Activated CD4-positive, alpha-beta T cell treated with anti-CD3 and anti-CD28 coated beads, Interleukin-2, amount 10 ng/mL, durations not matched to agents 7 days and 5 days (primary cell): ENCODE measurements at regions of chr5 and their contacts with region 1.

Region 1: GRCh38 chr5:132426525-132427138 is 57.1 kb downstream of the SLC22A5 start:
- DNase-seq: peak; percentile 70
- H3K4me3 Mint-ChIP-seq: peak overlapping the region; percentile 66
- H3K27ac Mint-ChIP-seq: peak overlapping the region; percentile 98
- H3K4me1 Mint-ChIP-seq: peaks cover 98% of the 10 kb centered on the region
- H3K27me3 Mint-ChIP-seq: no peaks in the 10 kb centered on the region

Region 2: GRCh38 chr5:132380047-132380446 is 46.6 kb before region 1 on chr5:
- CTCF ChIA-PET with region 1: no interaction called
- POLR2A ChIA-PET with region 1: no interaction called
- DNase-seq: no peak
- H3K4me3 Mint-ChIP-seq: no peak overlapping the region
- H3K27ac Mint-ChIP-seq: no peak overlapping the region
- H3K4me1 Mint-ChIP-seq: peaks cover under 1% of the 10 kb centered on the region
- H3K27me3 Mint-ChIP-seq: no peaks in the 10 kb centered on the region

Region 3: GRCh38 chr5:132437604-132438266 is 11.1 kb after region 1 on chr5:
- CTCF ChIA-PET with region 1: interaction called, 26 read pairs
- POLR2A ChIA-PET with region 1: no interaction called
- DNase-seq: peak; percentile 72
- H3K4me3 Mint-ChIP-seq: peak overlapping the region; percentile 53
- H3K27ac Mint-ChIP-seq: peak overlapping the region; percentile 89
- H3K4me1 Mint-ChIP-seq: peaks cover 87% of the 10 kb centered on the region
- H3K27me3 Mint-ChIP-seq: no peaks in the 10 kb centered on the region

Region 4: GRCh38 chr5:132466433-132467286 is 40.0 kb after region 1 on chr5:
- CTCF ChIA-PET with region 1: interaction called, 53 read pairs
- POLR2A ChIA-PET with region 1: interaction called, 19 read pairs
- DNase-seq: peak; percentile 83
- H3K4me3 Mint-ChIP-seq: peak overlapping the region; percentile 67
- H3K27ac Mint-ChIP-seq: peak overlapping the region; percentile 87
- H3K4me1 Mint-ChIP-seq: peaks cover 96% of the 10 kb centered on the region
- H3K27me3 Mint-ChIP-seq: no peaks in the 10 kb centered on the region

Region 5: GRCh38 chr5:132479111-132479951 is 52.7 kb after region 1 on chr5:
- CTCF ChIA-PET with region 1: interaction called, 62 read pairs
- POLR2A ChIA-PET with region 1: interaction called, 14 read pairs
- DNase-seq: no peak
- H3K4me3 Mint-ChIP-seq: peak overlapping the region; percentile 3
- H3K27ac Mint-ChIP-seq: peak overlapping the region; percentile 73
- H3K4me1 Mint-ChIP-seq: peaks cover 73% of the 10 kb centered on the region
- H3K27me3 Mint-ChIP-seq: no peaks in the 10 kb centered on the region

Region 6: DNA sequence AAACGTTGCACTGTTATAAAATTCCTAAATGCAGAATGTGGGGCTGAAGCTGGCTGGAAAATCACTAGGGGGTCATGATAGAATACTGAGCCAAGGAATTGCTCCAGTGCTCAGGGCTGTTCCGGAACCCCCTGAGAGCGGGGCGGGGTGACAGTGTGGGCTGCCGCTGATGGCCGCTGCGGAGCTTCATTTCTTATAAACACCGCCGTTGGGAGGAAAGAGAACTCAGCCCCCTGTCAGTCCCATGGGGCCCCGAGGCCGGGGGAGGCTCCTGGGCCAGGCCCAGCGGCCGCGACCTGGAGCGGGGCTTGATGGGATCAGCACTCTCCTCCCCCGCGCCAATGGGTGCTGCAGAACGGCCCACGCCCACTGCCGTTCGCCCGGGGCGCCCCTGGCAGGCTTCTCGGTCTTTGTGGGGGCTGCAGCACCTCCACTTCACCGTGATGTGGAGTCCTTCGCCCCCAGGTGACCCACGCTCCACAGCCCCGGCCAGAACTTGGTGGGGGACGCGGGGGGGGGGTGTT is 69.1 kb after region 1 on chr5:
- CTCF ChIA-PET with region 1: interaction called, 32 read pairs
- POLR2A ChIA-PET with region 1: interaction called, 21 read pairs
- DNase-seq: peak; percentile 81
- H3K4me3 Mint-ChIP-seq: peak overlapping the region; percentile 92
- H3K27ac Mint-ChIP-seq: peak overlapping the region; percentile 98
- H3K4me1 Mint-ChIP-seq: peaks cover 80% of the 10 kb centered on the region
- H3K27me3 Mint-ChIP-seq: no peaks in the 10 kb centered on the region